Panc1 (cell line): ENCODE measurements at regions of chr3 and their contacts with region 1.

Region 1: GRCh38 chr3:142356818-142357217 is 91.0 kb downstream of the XRN1 start:
- DNase-seq: no peak
- ATAC-seq: no peak
- H3K4me3 ChIP-seq: no peak overlapping the region
- H3K27ac ChIP-seq: no peak overlapping the region
- H3K4me1 ChIP-seq: no peaks in the 10 kb centered on the region
- H3K27me3 ChIP-seq: no peaks in the 10 kb centered on the region
- CTCF ChIP-seq: no peak

Region 2: GRCh38 chr3:142226484-142226883 is 130.3 kb before region 1 on chr3:
- CTCF ChIA-PET with region 1: no interaction called
- POLR2A ChIA-PET with region 1: interaction called, 10 read pairs
- in situ Hi-C with region 1: no loop called
- intact Hi-C with region 1: no loop called
- DNase-seq: no peak
- ATAC-seq: no peak
- H3K4me3 ChIP-seq: no peak overlapping the region
- H3K27ac ChIP-seq: no peak overlapping the region
- H3K4me1 ChIP-seq: peaks cover 10% of the 10 kb centered on the region
- H3K27me3 ChIP-seq: no peaks in the 10 kb centered on the region
- CTCF ChIP-seq: peak; percentile 55

Region 3: DNA sequence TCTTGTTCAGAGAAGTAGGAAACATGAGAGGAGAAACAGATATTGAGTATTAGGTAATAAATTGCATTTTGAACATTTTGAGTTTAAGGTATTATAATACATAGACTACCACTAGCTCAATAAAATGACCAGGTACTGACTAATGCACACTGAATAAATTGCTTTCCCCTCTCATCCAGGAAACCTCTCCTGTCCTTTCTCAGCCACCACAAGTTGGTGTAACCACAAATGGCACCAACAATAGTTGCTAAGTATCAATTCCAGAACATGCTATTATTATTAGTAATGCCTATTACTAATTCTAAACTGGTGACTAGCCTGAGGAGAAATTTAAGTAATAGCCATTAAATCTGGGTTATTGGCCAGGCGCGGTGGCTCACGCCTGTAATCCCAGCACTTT is 138.3 kb after region 1 on chr3:
- CTCF ChIA-PET with region 1: no interaction called
- POLR2A ChIA-PET with region 1: interaction called, 17 read pairs
- in situ Hi-C with region 1: no loop called
- intact Hi-C with region 1: no loop called
- DNase-seq: no peak
- ATAC-seq: no peak
- H3K4me3 ChIP-seq: no peak overlapping the region
- H3K27ac ChIP-seq: no peak overlapping the region
- H3K4me1 ChIP-seq: peaks cover 2% of the 10 kb centered on the region; the same call in 1 of the 2 replicates
- H3K27me3 ChIP-seq: no peaks in the 10 kb centered on the region
- CTCF ChIP-seq: no peak